ENCODE measurements at regions of chr1 and their contacts with region 1.

Region 1: GRCh38 chr1:152013664-152014237 is 20.1 kb upstream of the S100A10 start:
- DNase-seq: no peak
- H3K4me3 ChIP-seq: no peak overlapping the region
- H3K27me3 ChIP-seq: peaks cover 12% of the 10 kb centered on the region
- CTCF ChIP-seq: peak; percentile 82

Region 2: GRCh38 chr1:151934048-151934493 is 79.7 kb before region 1 on chr1:
- CTCF ChIA-PET with region 1: interaction called, 56 read pairs
- POLR2A ChIA-PET with region 1: no interaction called
- DNase-seq: no peak
- H3K4me3 ChIP-seq: no peak overlapping the region
- H3K27me3 ChIP-seq: peaks cover 5% of the 10 kb centered on the region; the same call in 1 of the 2 replicates
- CTCF ChIP-seq: peak; percentile 89

Region 3: DNA sequence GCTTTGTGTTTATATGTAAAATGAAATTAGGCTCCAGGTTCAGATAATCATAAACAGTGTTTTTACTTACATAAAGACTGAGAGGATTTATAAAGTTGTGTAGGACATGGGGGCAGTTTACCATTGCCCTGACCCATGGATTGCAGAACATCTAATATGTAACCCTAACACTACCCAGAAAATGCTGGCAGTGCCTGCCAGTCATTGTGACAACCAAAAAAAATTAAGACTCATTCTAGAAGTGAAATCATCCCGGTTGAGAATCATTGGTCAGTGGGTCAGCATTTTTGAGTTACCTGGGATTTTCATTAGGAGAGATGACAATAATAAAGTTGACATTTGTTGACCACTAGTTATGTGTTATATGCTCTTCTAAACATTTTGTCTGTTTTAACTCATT is 73.2 kb before region 1 on chr1:
- CTCF ChIA-PET with region 1: interaction called, 56 read pairs
- POLR2A ChIA-PET with region 1: no interaction called
- DNase-seq: no peak
- H3K4me3 ChIP-seq: no peak overlapping the region
- H3K27me3 ChIP-seq: no peaks in the 10 kb centered on the region
- CTCF ChIP-seq: no peak

Region 4: GRCh38 chr1:151992345-151993086 is 21.2 kb before region 1 on chr1:
- CTCF ChIA-PET with region 1: no interaction called
- POLR2A ChIA-PET with region 1: no interaction called
- DNase-seq: peak; percentile 82
- H3K4me3 ChIP-seq: peak overlapping the region; percentile 89
- H3K27me3 ChIP-seq: no peaks in the 10 kb centered on the region
- CTCF ChIP-seq: no peak

Region 5: DNA sequence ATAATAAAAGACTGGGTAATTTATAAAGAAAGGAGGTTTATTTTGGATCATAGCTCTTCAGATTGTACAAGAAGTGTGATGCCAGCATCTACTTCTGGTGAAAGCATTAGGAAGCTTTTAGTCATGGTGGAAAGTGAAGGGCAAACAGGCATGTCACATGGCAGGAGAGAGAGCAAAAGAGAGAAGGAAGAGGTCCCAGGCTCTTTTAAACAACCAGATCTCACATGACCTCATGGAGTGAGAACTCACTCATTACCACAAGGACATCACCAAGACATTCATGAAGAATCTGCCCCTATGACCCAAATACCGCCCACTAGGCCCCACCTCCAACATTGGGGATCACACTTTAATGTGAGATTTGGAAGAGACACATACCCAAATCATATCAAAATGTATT is 135.2 kb after region 1 on chr1:
- CTCF ChIA-PET with region 1: no interaction called
- POLR2A ChIA-PET with region 1: no interaction called
- DNase-seq: no peak
- H3K4me3 ChIP-seq: no peak overlapping the region
- H3K27me3 ChIP-seq: no peaks in the 10 kb centered on the region; the same call in 1 of the 2 replicates
- CTCF ChIP-seq: no peak

Measured in BJ (cell line).